Mammary epithelial cell (primary cell): ENCODE measurements at regions of chr4 and their contacts with region 1.

Region 1: GRCh38 chr4:70839589-70840093 is at the start of gene GRSF1:
- DNase-seq: peak; percentile 87
- H3K4me3 ChIP-seq: peak within 1 kb of the TSS; percentile 74 to 93 (median 87)
- H3K27ac ChIP-seq: peak within 1 kb of the TSS; percentile 50
- H3K4me1 ChIP-seq: peaks cover 7% of the 10 kb centered on the region
- H3K27me3 ChIP-seq: no peaks in the 10 kb centered on the region
- CTCF ChIP-seq: peak in 1 of 2 donors; percentile 24
- total RNA-seq, gene GRSF1: 55.7 to 85.6 TPM

Region 2: DNA sequence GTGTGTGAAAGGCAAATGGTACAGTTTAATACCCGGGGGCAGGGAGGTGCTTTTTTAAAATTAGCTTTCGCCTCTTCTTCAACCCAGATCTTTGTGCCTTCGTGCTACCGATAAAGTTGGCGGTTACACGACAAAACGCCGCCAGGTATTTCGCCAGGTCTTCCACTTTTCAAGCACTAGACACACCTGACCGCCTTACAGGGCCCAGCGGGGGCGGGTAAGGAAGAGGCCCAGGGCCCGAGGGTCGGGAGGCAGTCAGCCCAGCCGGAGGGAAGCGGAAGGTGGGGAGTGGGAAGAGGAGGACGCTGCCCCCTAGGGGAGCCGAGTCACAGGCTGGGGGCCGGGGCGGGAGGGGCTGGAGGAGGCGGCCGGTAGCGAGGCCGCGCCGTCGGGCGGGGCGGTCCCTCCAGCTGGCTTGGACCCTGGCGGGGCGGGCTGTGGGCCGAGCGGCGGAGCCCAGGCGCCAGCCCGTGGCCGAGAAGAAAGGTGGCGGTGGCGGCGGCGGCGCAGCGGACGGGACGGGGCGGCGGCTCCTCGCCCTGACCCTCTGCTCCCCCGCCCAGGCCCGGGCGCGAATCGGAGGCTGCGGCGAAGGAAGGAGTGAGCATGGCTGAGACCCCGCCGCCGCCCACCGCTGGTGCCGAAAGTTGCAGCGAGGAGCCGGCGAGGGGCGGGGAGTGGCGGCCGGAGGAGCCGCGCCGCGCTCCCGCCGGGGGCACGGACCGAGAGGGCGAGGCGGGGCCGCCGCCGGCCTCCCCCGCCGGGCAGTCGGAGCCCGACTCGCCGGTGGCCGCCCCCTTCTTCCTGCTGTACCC is 135.1 kb before region 1 on chr4:
- CTCF ChIA-PET with region 1: no interaction called
- dilution Hi-C with region 1: no loop called
- in situ Hi-C with region 1: no loop called
- intact Hi-C with region 1: loop called (anchors 1 kb)
- DNase-seq: peak; percentile 56
- H3K4me3 ChIP-seq: peak overlapping the region; percentile 67 to 83 (median 73)
- H3K27ac ChIP-seq: peak overlapping the region; percentile 73
- H3K4me1 ChIP-seq: peaks cover 27% of the 10 kb centered on the region
- H3K27me3 ChIP-seq: no peaks in the 10 kb centered on the region
- CTCF ChIP-seq: peak in 1 of 2 donors; percentile 43

Region 3: DNA sequence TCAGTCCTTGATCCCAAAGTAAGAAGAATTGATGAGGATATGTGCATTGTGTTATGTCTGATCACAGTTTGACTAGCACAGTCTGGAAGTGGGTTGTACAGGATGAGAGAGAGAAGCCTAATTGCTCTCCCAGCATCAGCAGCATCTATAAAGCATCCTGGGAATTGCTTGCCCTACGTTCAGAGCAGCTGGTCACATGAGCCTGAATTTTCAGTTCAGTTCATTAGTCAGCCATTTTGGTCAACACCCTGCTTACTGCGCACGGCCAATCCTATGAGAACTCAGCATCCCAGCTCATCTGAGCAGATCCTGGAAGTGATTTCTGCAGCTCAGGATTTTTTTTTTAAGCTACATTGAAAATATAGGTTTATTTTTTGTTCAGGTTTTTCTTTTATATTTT is 117.9 kb before region 1 on chr4 and contains the start of gene RUFY3:
- CTCF ChIA-PET with region 1: no interaction called
- dilution Hi-C with region 1: no loop called
- in situ Hi-C with region 1: no loop called
- intact Hi-C with region 1: loop called (anchors 5 kb)
- DNase-seq: no peak
- H3K4me3 ChIP-seq: no peak within 1 kb of the TSS
- H3K27ac ChIP-seq: no peak within 1 kb of the TSS
- H3K4me1 ChIP-seq: peaks cover 13% of the 10 kb centered on the region
- H3K27me3 ChIP-seq: no peaks in the 10 kb centered on the region
- CTCF ChIP-seq: no peak
- total RNA-seq, gene RUFY3: 36.2 to 40.1 TPM

Region 4: DNA sequence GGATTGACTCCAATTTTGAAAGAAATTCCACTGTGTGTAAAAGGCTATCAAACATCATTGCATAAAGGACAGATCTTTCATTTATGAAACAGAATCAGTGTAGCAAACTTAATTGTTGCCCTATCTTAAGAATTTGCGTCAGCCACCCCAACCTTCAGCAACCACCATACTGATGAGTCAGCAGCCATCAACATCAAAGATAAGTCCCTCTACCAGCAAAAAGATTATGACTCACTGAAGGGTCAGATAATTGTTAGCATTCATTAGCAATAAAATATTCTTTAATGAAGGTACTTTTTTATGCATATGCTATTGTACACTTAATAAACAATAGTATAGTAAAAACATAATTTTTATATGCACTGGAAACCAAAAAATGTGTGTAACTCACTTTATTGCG is 15.8 kb after region 1 on chr4:
- CTCF ChIA-PET with region 1: no interaction called
- dilution Hi-C with region 1: no loop called
- in situ Hi-C with region 1: no loop called
- intact Hi-C with region 1: no loop called
- DNase-seq: no peak
- H3K4me3 ChIP-seq: no peak overlapping the region
- H3K27ac ChIP-seq: no peak overlapping the region
- H3K4me1 ChIP-seq: no peaks in the 10 kb centered on the region
- H3K27me3 ChIP-seq: peaks cover 2% of the 10 kb centered on the region
- CTCF ChIP-seq: no peak

Region 5: DNA sequence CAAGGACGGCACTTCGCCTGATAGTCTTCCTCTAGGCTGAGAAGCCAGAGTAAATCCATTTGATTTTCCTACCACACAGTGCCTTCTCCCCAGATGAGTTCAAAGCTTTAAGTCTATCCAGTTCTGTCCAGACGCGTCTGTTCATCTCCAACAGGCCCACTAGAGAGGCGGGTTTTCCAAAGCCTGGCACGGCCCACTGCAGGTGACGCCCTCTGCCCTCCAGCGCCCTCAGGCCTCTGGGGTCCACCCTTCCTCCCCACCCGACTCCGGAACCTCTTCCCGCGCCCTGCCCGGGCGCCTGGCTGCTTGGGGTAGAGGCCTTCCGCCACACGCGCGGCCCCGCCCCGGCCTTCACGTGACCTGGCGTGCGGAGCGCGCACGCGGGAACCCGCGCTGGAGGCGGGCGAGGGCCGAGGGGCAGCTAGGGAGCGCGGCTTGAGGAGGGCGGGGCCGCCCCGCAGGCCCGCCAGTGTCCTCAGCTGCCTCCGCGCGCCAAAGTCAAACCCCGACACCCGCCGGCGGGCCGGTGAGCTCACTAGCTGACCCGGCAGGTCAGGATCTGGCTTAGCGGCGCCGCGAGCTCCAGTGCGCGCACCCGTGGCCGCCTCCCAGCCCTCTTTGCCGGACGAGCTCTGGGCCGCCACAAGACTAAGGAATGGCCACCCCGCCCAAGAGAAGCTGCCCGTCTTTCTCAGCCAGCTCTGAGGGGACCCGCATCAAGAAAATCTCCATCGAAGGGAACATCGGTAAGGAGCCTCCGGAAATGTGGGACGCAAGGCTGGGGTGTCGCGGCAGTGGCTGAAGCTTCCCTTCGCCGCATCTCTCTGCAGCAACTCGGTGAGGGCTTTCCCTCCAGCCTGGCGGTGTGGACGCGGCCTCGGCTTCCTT is 153.8 kb after region 1 on chr4 and contains the start of gene DCK:
- CTCF ChIA-PET with region 1: no interaction called
- dilution Hi-C with region 1: no loop called
- in situ Hi-C with region 1: no loop called
- intact Hi-C with region 1: loop called (anchors 1 kb)
- DNase-seq: peak; percentile 91
- H3K4me3 ChIP-seq: peak within 1 kb of the TSS; percentile 81 to 95 (median 91)
- H3K27ac ChIP-seq: peak within 1 kb of the TSS; percentile 76
- H3K4me1 ChIP-seq: peaks cover 7% of the 10 kb centered on the region
- H3K27me3 ChIP-seq: no peaks in the 10 kb centered on the region
- CTCF ChIP-seq: no peak
- total RNA-seq, gene DCK: 10.0 to 16.0 TPM

Region 6: DNA sequence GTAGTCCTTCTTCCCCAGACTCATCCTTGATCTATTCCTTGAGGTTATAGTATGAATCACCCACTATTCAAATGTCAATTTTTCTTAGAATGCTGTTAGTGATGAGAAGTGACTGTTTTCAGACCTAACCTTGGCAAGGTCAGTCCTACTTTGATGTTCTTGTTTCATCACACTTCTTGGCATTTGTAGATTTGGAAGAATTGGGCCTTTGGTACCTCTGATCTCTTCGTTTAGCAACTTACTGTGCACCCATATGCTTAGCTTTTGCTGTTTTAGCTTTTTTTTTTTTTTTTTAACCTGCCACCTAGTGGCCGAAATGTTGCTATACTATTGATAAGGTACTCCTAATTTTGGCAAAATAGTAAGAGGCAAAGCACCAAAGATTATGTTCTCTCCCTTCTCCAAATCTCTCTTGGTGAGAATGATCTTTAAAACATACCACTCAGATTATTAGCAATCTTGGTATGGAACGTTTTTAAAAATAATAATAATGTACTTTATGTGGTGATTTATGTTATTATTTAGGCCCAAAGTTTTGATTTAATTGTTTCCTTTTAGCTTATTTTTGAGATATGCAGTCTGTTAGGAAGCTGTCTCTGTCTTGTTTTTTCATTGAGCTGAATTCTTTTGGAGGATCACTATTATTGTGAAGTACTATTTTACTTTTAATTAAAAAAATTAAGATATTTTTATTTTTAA is 170.4 kb after region 1 on chr4:
- CTCF ChIA-PET with region 1: interaction called, 46 read pairs
- dilution Hi-C with region 1: no loop called
- in situ Hi-C with region 1: no loop called
- intact Hi-C with region 1: loop called (anchors 2 kb)
- DNase-seq: peak; percentile 41
- H3K4me3 ChIP-seq: no peak overlapping the region
- H3K27ac ChIP-seq: no peak overlapping the region
- H3K4me1 ChIP-seq: peaks cover 3% of the 10 kb centered on the region
- H3K27me3 ChIP-seq: no peaks in the 10 kb centered on the region
- CTCF ChIP-seq: peak; percentile 63 to 64

Region 7: GRCh38 chr4:71156616-71157015 is 317.0 kb after region 1 on chr4:
- CTCF ChIA-PET with region 1: no interaction called
- dilution Hi-C with region 1: no loop called
- in situ Hi-C with region 1: no loop called
- intact Hi-C with region 1: no loop called
- DNase-seq: no peak
- H3K4me3 ChIP-seq: no peak overlapping the region
- H3K27ac ChIP-seq: no peak overlapping the region
- H3K4me1 ChIP-seq: no peaks in the 10 kb centered on the region
- H3K27me3 ChIP-seq: no peaks in the 10 kb centered on the region
- CTCF ChIP-seq: no peak